RWPE1 (cell line): ENCODE measurements at regions of chr2 and their contacts with region 1.

Region 1: GRCh38 chr2:200786829-200787228 is 24.9 kb upstream of the BZW1 start:
- DNase-seq: peak; percentile 52
- H3K27ac ChIP-seq: no peak overlapping the region
- CTCF ChIP-seq: no peak

Region 2: DNA sequence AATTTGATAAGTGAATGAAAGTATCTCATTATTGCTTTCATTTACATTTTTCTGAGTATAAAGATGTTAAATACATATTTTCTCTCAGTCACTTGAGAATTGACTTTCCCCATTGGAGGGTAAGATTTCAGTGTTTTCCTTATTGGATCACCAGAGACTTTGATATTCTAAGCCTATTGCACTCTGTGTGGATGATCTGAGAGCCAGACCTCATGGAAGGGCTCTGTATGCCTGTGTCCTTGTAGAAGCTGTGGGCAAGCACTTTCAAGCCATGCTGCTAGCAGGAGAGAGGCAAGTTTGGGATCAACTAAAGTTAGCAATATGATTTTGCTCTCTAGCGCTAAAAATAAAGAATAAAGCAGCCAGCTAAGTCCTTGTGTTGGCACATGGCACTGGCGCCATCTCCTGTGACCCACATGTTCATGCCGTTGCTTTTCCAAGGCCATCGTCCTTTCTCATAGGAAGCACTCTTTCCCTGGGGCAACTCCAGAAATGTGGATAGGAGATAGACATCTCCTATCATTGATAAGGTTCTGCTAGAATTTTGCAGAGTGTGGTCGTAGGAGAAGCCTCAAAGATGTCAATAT is 128.5 kb before region 1 on chr2:
- CTCF ChIA-PET with region 1: interaction called, 10 read pairs
- POLR2A ChIA-PET with region 1: no interaction called
- DNase-seq: no peak
- H3K27ac ChIP-seq: no peak overlapping the region
- CTCF ChIP-seq: no peak

Region 3: GRCh38 chr2:201135411-201135810 is 348.6 kb after region 1 on chr2:
- CTCF ChIA-PET with region 1: no interaction called
- POLR2A ChIA-PET with region 1: no interaction called
- DNase-seq: no peak
- H3K27ac ChIP-seq: no peak overlapping the region
- CTCF ChIP-seq: no peak

Region 4: DNA sequence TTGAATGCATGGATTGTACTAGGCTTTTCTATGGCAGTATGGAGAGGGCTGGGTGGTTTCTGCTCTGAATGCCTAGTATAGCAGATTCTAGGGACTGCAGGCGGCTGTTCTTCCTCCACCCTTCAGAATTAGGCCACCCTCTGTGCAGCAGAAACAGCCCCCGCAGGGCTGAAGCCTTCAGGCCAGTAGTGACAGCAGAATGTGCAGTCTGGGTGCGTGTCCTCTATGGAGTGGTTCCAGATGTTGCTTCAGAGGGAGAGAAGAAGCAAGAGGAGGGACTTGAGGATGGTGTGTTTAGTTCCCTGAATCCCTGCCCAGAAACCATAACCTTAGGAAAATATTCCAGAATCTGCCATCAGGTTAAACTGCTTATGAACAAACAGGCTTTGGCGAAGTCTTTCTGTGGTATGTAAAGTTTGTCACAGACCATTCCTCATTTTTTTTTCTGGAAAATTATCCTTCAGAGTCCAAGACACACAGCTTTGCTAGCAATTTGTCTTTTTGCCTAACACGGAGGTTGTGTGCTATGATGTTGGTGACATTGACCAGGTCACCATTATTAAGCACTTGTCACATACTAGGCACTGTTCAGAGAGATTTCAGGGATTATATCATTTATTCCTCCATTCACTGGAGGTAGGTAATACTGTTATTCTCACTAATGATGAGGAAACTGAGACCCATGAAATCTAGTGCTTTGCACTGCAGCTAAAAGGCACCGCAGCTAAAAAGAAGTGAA is 417.3 kb after region 1 on chr2:
- CTCF ChIA-PET with region 1: no interaction called
- POLR2A ChIA-PET with region 1: no interaction called
- DNase-seq: no peak
- H3K27ac ChIP-seq: no peak overlapping the region
- CTCF ChIP-seq: no peak